ENCODE measurements at regions of chr7 and their contacts with region 1.

Region 1: GRCh38 chr7:87173471-87173870 is 21.2 kb downstream of the DMTF1 start:
- DNase-seq: no peak
- ATAC-seq: no peak
- H3K4me3 ChIP-seq: no peak overlapping the region
- H3K27ac ChIP-seq: no peak overlapping the region
- H3K4me1 ChIP-seq: no peaks in the 10 kb centered on the region
- H3K27me3 ChIP-seq: no peaks in the 10 kb centered on the region
- CTCF ChIP-seq: no peak
- POLR2A ChIP-seq: no peak
- RAD21 ChIP-seq: no peak

Region 2: DNA sequence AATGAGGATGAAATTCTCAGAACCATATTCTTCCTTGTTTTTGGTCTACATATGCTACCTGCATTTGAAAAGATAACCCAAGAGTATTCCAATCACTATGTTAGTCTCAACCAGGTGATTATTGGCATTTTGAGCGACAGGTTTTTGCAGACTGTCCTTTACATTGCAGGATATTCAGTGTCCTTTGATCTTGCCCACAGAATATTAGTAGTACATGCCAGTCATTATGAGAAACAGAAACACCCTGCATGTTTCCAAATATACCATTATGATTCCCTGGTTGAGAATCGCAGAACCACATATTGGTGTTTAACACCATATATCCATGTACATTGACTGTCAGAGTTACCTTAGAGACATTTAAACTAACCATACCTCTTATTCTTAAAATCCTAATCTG is 15.5 kb after region 1 on chr7:
- CTCF ChIA-PET with region 1: interaction called, 3 read pairs
- POLR2A ChIA-PET with region 1: interaction called, 6 read pairs
- dilution Hi-C with region 1: no loop called
- in situ Hi-C with region 1: no loop called
- intact Hi-C with region 1: loop called (anchors 2 kb)
- DNase-seq: no peak
- ATAC-seq: no peak
- H3K4me3 ChIP-seq: no peak overlapping the region
- H3K27ac ChIP-seq: no peak overlapping the region
- H3K4me1 ChIP-seq: no peaks in the 10 kb centered on the region
- H3K27me3 ChIP-seq: no peaks in the 10 kb centered on the region
- CTCF ChIP-seq: no peak
- POLR2A ChIP-seq: no peak
- RAD21 ChIP-seq: no peak

Measured in IMR-90 (cell line).